ENCODE measurements at regions of chr3 and their contacts with region 1.

Region 1: DNA sequence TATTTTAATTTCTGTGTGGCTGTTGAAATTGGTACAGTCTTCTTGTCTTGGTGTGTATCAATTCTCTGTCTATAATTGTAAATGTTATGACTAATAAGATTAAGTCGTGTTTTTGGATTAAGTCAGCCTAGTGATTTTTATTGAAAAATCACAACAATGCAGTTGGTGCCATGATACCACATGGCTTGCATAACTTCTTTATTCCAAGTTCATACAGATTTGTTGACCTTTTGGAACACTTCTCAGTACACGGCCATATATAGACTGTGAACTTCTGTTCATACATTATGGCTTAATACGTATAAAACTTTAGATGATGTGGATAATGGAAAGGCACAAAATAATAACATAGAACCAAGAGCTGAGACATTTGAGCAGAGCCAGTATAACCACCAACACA is 121.2 kb upstream of the NAALADL2 start:
- DNase-seq: no peak
- ATAC-seq: no peak
- H3K4me3 ChIP-seq: no peak overlapping the region
- H3K4me3 Mint-ChIP-seq: no peak overlapping the region
- H3K27ac ChIP-seq: no peak overlapping the region
- H3K27ac Mint-ChIP-seq: no peak overlapping the region
- H3K4me1 ChIP-seq: no peaks in the 10 kb centered on the region
- H3K4me1 Mint-ChIP-seq: no peaks in the 10 kb centered on the region
- H3K27me3 ChIP-seq: no peaks in the 10 kb centered on the region
- H3K27me3 Mint-ChIP-seq: no peaks in the 10 kb centered on the region
- CTCF ChIP-seq: no peak

Region 2: DNA sequence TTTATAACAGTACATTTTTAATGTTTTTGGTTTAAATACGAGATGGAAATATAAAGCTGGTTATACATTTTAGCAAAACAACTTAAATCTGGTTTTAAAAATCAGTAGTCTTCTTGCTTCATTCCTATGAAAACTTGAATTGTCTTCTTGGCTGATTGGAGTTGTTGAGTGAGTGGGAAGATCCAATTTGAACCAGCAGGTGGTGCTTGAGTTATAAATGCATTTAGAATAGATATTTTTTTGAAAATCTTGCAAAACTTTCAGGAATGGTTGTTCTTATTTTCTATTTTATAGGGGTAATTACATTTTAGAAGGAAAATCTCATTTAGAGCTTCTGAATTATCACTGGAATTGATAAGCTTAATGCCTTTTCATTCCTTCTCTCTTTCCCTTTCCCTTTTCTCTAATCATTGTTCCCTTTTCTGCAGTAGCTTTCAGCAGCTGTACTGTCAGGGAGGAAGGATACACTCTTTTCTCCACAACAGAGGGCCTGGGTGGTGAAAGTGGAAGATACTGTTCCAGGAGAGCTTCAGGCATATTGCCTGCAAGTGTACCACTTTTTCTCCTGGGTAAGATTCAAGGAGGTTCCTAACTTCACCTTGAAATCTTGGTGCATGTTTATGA is 1004.8 kb before region 1 on chr3:
- CTCF ChIA-PET with region 1: no interaction called
- POLR2A ChIA-PET with region 1: no interaction called
- intact Hi-C with region 1: no loop called
- DNase-seq: no peak
- ATAC-seq: no peak
- H3K4me3 ChIP-seq: no peak overlapping the region
- H3K4me3 Mint-ChIP-seq: no peak overlapping the region
- H3K27ac ChIP-seq: no peak overlapping the region
- H3K27ac Mint-ChIP-seq: no peak overlapping the region
- H3K4me1 ChIP-seq: no peaks in the 10 kb centered on the region
- H3K4me1 Mint-ChIP-seq: no peaks in the 10 kb centered on the region
- H3K27me3 ChIP-seq: no peaks in the 10 kb centered on the region
- H3K27me3 Mint-ChIP-seq: no peaks in the 10 kb centered on the region
- CTCF ChIP-seq: no peak

Region 3: GRCh38 chr3:174533286-174533685 is 204.7 kb before region 1 on chr3:
- CTCF ChIA-PET with region 1: no interaction called
- POLR2A ChIA-PET with region 1: no interaction called
- intact Hi-C with region 1: loop called in 1 of 2 experiments (anchors 5 kb)
- DNase-seq: no peak
- ATAC-seq: no peak
- H3K4me3 ChIP-seq: no peak overlapping the region
- H3K4me3 Mint-ChIP-seq: no peak overlapping the region
- H3K27ac ChIP-seq: no peak overlapping the region
- H3K27ac Mint-ChIP-seq: no peak overlapping the region
- H3K4me1 ChIP-seq: no peaks in the 10 kb centered on the region
- H3K4me1 Mint-ChIP-seq: no peaks in the 10 kb centered on the region
- H3K27me3 ChIP-seq: no peaks in the 10 kb centered on the region
- H3K27me3 Mint-ChIP-seq: no peaks in the 10 kb centered on the region
- CTCF ChIP-seq: no peak

Region 4: GRCh38 chr3:174784206-174784934 is 46.4 kb after region 1 on chr3:
- CTCF ChIA-PET with region 1: no interaction called
- POLR2A ChIA-PET with region 1: no interaction called
- intact Hi-C with region 1: no loop called
- DNase-seq: no peak
- ATAC-seq: no peak
- H3K4me3 ChIP-seq: no peak overlapping the region
- H3K4me3 Mint-ChIP-seq: no peak overlapping the region
- H3K27ac ChIP-seq: no peak overlapping the region
- H3K27ac Mint-ChIP-seq: no peak overlapping the region
- H3K4me1 ChIP-seq: no peaks in the 10 kb centered on the region
- H3K4me1 Mint-ChIP-seq: no peaks in the 10 kb centered on the region
- H3K27me3 ChIP-seq: no peaks in the 10 kb centered on the region
- H3K27me3 Mint-ChIP-seq: no peaks in the 10 kb centered on the region
- CTCF ChIP-seq: no peak

Measured in CD4-positive, alpha-beta T cell (primary cell).